MCF 10A (cell line): ENCODE measurements at regions of chr1 and their contacts with region 1.

Region 1: DNA sequence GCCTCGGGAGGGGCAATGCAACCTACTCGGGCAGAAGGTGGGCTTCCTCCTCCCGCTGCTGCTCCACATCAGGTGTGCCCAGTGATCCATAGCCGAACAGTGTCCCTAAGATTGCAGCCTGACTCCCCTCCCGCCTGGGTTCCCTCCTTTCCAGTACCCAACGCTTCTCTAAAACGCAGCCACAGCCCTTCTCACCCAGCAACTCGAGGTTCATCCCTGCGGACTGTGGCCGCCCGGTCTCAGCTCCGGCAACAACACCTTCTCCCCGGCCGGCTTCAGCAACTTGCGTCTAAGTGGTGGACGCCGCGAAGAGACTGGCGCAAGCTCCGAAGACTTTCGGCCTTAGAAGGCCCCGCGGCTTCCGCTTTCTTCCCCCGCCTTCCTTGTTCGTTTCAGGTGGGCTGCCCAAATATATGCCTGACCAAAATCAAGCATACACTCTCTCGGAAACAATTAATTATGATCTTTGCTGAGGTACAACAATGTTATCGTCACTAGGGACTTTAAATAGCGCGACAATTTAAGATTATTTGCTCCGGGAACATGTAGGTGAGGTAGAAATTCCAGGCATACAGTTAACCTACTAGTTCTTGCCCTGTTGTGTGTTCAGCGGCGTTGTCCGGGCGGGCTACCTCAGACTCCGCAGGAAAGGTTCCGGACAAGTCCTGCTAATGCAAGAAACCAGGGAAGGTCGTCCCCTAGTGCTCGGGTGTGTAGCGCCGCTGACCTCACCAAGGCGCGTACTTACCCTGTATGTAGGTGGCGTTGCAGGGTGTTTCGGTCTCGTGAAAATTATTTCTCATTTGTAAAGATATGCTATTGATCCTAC is at the start of gene RBBP5:
- DNase-seq: peak; percentile 100
- H3K4me3 Mint-ChIP-seq: peak within 1 kb of the TSS; percentile 96
- H3K27ac Mint-ChIP-seq: peak within 1 kb of the TSS; percentile 100
- H3K4me1 Mint-ChIP-seq: peaks cover 11% of the 10 kb centered on the region
- H3K27me3 Mint-ChIP-seq: no peaks in the 10 kb centered on the region
- CTCF ChIP-seq: peak; percentile 90
- total RNA-seq, gene RBBP5: 24.8 and 30.4 TPM in 2 replicates

Region 2: GRCh38 chr1:204989266-204990058 is 132.4 kb before region 1 on chr1:
- CTCF ChIA-PET with region 1: interaction called, 12 read pairs
- POLR2A ChIA-PET with region 1: interaction called, 5 read pairs
- intact Hi-C with region 1: loop called (anchors 1 kb)
- DNase-seq: peak; percentile 91
- H3K4me3 Mint-ChIP-seq: no peak overlapping the region
- H3K27ac Mint-ChIP-seq: no peak overlapping the region
- H3K4me1 Mint-ChIP-seq: no peaks in the 10 kb centered on the region
- H3K27me3 Mint-ChIP-seq: peaks cover 99% of the 10 kb centered on the region
- CTCF ChIP-seq: peak; percentile 100

Region 3: GRCh38 chr1:205082431-205082830 is 39.4 kb before region 1 on chr1:
- CTCF ChIA-PET with region 1: interaction called, 8 read pairs
- POLR2A ChIA-PET with region 1: interaction called, 53 read pairs
- intact Hi-C with region 1: no loop called
- DNase-seq: no peak
- H3K4me3 Mint-ChIP-seq: no peak overlapping the region
- H3K27ac Mint-ChIP-seq: no peak overlapping the region
- H3K4me1 Mint-ChIP-seq: peaks cover 4% of the 10 kb centered on the region
- H3K27me3 Mint-ChIP-seq: no peaks in the 10 kb centered on the region
- CTCF ChIP-seq: no peak

Region 4: GRCh38 chr1:205111354-205111753 is 10.5 kb before region 1 on chr1:
- CTCF ChIA-PET with region 1: interaction called, 16 read pairs
- POLR2A ChIA-PET with region 1: interaction called, 71 read pairs
- intact Hi-C with region 1: no loop called
- DNase-seq: no peak
- H3K4me3 Mint-ChIP-seq: no peak overlapping the region
- H3K27ac Mint-ChIP-seq: no peak overlapping the region
- H3K4me1 Mint-ChIP-seq: no peaks in the 10 kb centered on the region
- H3K27me3 Mint-ChIP-seq: no peaks in the 10 kb centered on the region
- CTCF ChIP-seq: no peak

Region 5: DNA sequence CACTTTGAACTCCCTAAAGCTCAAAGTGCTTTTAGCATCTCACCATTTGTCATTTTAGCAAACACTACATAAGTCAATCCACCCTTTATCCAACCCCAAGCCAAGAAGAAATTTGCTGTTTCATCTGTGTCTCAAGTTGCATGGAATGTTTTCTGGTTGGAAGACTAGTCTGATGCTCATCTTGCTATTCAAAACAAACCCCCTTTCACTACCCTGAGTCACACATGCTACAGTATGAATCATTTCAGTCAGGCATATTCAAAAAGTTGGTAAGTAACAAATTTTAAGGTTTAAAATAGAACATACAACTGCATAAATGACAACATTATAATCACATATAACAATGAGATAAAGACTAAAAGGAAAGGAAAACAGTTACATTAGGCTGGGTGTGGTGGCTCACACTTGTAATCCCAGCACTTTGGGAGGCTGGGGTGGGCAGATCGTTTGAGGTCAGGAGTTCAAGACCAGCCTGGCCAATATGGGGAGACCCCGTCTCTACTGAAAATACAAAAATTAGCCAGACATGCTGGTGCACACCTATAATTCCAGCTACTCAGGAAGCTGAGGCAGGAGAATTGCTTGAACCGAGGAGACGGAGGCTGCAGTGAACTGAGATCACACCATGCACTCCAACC is 51.0 kb after region 1 on chr1:
- CTCF ChIA-PET with region 1: interaction called, 12 read pairs
- POLR2A ChIA-PET with region 1: interaction called, 42 read pairs
- intact Hi-C with region 1: loop called (anchors 1 kb)
- DNase-seq: peak; percentile 93
- H3K4me3 Mint-ChIP-seq: no peak overlapping the region
- H3K27ac Mint-ChIP-seq: peak overlapping the region; percentile 95
- H3K4me1 Mint-ChIP-seq: peaks cover 15% of the 10 kb centered on the region
- H3K27me3 Mint-ChIP-seq: no peaks in the 10 kb centered on the region
- CTCF ChIP-seq: no peak

Region 6: GRCh38 chr1:205227584-205228006 is 105.7 kb after region 1 on chr1 and contains the start of gene TMCC2:
- CTCF ChIA-PET with region 1: interaction called, 12 read pairs
- POLR2A ChIA-PET with region 1: interaction called, 41 read pairs
- intact Hi-C with region 1: loop called (anchors 1 kb)
- DNase-seq: peak; percentile 91
- H3K4me3 Mint-ChIP-seq: peak within 1 kb of the TSS; percentile 63
- H3K27ac Mint-ChIP-seq: no peak within 1 kb of the TSS
- H3K4me1 Mint-ChIP-seq: peaks cover 20% of the 10 kb centered on the region
- H3K27me3 Mint-ChIP-seq: no peaks in the 10 kb centered on the region
- CTCF ChIP-seq: no peak
- total RNA-seq, gene TMCC2: 0.54 and 0.79 TPM in 2 replicates